Endothelial cell of umbilical vein (primary cell): ENCODE measurements at regions of chr10 and their contacts with region 1.

Region 1: DNA sequence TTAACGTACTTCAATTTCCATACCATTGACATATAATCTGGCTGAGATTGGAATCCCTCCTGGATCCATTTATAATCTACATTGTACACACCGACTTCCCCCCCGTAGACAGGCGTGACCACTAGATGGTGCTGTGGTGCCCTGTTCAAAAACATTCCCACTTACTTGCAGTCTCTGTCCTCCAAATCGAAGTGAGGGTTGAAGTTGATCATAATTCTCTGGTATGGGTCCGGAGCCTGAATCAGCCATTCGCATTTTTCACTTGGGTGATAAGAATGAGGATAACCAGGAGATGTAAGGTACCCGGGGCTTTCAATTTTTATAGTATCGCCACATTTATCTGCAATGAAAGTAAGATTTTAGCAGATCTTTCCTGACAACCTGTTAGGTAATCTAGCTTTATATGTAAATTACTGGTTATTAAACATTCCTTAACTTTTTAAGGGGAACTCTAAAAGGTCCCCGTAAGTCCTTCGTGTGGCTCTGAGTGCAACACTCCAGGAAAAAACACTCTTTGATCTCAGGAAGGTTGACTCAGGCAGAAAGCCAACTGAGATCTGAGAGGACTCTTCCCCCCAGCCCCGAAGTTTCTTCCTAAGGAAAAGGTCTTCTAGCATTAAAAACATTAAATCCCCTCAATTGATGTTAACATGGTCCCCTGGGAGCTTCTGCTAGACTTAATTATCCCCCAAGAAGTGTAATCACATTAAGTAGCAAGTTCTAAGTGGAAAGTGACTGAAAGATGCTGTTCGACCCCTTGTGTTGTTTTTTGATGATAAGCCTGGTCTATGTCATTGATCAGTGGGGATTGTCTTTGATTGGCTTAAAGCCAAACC is 3.7 kb downstream of the NRP1 start:
- DNase-seq: peak; percentile 92
- H3K4me3 ChIP-seq: peak overlapping the region; percentile 90 to 100 (median 97)
- H3K27ac ChIP-seq: peak overlapping the region; percentile 84
- H3K4me1 ChIP-seq: peaks cover 45% of the 10 kb centered on the region
- H3K27me3 ChIP-seq: no peaks in the 10 kb centered on the region
- CTCF ChIP-seq: peak; percentile 69 to 88
- POLR2A ChIP-seq: no peak

Region 2: GRCh38 chr10:33115738-33116719 is 214.7 kb before region 1 on chr10:
- CTCF ChIA-PET with region 1: interaction called, 6 read pairs
- POLR2A ChIA-PET with region 1: no interaction called
- dilution Hi-C with region 1: no loop called
- intact Hi-C with region 1: loop called (anchors 5 kb)
- DNase-seq: peak; percentile 81
- H3K4me3 ChIP-seq: no peak overlapping the region
- H3K27ac ChIP-seq: no peak overlapping the region
- H3K4me1 ChIP-seq: peaks cover 3% of the 10 kb centered on the region
- H3K27me3 ChIP-seq: no peaks in the 10 kb centered on the region
- CTCF ChIP-seq: peak; percentile 75 to 77
- POLR2A ChIP-seq: no peak

Region 3: GRCh38 chr10:33661580-33662336 is 331.0 kb after region 1 on chr10:
- CTCF ChIA-PET with region 1: interaction called, 4 read pairs
- POLR2A ChIA-PET with region 1: no interaction called
- dilution Hi-C with region 1: no loop called
- intact Hi-C with region 1: loop called (anchors 10 kb)
- DNase-seq: peak; percentile 54
- H3K4me3 ChIP-seq: no peak overlapping the region
- H3K27ac ChIP-seq: no peak overlapping the region
- H3K4me1 ChIP-seq: peaks cover 14% of the 10 kb centered on the region
- H3K27me3 ChIP-seq: no peaks in the 10 kb centered on the region
- CTCF ChIP-seq: no peak
- POLR2A ChIP-seq: no peak

Region 4: DNA sequence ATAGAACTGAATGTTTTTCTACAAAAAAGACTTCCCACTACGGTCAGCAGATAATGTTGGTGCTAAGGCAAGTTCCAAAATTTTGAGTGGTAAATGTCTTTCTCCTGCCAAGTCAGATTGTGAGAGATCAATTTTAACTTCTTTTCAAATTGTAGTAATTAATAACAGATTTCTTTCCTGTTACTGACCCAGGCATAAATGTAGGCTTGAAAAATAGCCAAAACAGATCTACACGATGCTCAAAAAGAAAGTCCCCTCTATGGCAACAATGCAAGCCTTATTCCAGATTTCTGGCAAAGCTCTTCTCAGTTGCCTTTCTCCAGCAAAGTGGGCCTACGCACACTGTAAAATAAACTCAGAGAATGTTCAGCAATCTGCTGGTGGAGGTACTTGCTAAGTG is 644.7 kb after region 1 on chr10:
- CTCF ChIA-PET with region 1: no interaction called
- POLR2A ChIA-PET with region 1: no interaction called
- dilution Hi-C with region 1: no loop called
- intact Hi-C with region 1: loop called (anchors 10 kb)
- DNase-seq: no peak
- H3K4me3 ChIP-seq: no peak overlapping the region
- H3K27ac ChIP-seq: no peak overlapping the region
- H3K4me1 ChIP-seq: no peaks in the 10 kb centered on the region
- H3K27me3 ChIP-seq: peaks cover 10 to 12% of the 10 kb centered on the region in 2 experiments
- CTCF ChIP-seq: no peak
- POLR2A ChIP-seq: no peak

Region 5: GRCh38 chr10:34254596-34254995 is 923.8 kb after region 1 on chr10:
- CTCF ChIA-PET with region 1: no interaction called
- POLR2A ChIA-PET with region 1: no interaction called
- dilution Hi-C with region 1: no loop called
- intact Hi-C with region 1: loop called (anchors 10 kb)
- DNase-seq: peak; percentile 88
- H3K4me3 ChIP-seq: no peak overlapping the region
- H3K27ac ChIP-seq: no peak overlapping the region
- H3K4me1 ChIP-seq: peaks cover 12% of the 10 kb centered on the region
- H3K27me3 ChIP-seq: no peaks in the 10 kb centered on the region
- CTCF ChIP-seq: no peak
- POLR2A ChIP-seq: no peak

Region 6: GRCh38 chr10:34434119-34434594 is 1103.4 kb after region 1 on chr10:
- CTCF ChIA-PET with region 1: interaction called, 3 read pairs
- POLR2A ChIA-PET with region 1: interaction called, 10 read pairs
- dilution Hi-C with region 1: no loop called
- intact Hi-C with region 1: no loop called
- DNase-seq: peak; percentile 33
- H3K4me3 ChIP-seq: no peak overlapping the region
- H3K27ac ChIP-seq: no peak overlapping the region
- H3K4me1 ChIP-seq: peaks cover 34% of the 10 kb centered on the region
- H3K27me3 ChIP-seq: no peaks in the 10 kb centered on the region
- CTCF ChIP-seq: no peak
- POLR2A ChIP-seq: no peak

Region 7: GRCh38 chr10:34637418-34637911 is 1306.7 kb after region 1 on chr10:
- CTCF ChIA-PET with region 1: interaction called, 61 read pairs
- POLR2A ChIA-PET with region 1: no interaction called
- dilution Hi-C with region 1: no loop called
- intact Hi-C with region 1: loop called (anchors 1 kb)
- DNase-seq: peak; percentile 57
- H3K4me3 ChIP-seq: no peak overlapping the region
- H3K27ac ChIP-seq: no peak overlapping the region
- H3K4me1 ChIP-seq: peaks cover 4% of the 10 kb centered on the region
- H3K27me3 ChIP-seq: no peaks in the 10 kb centered on the region
- CTCF ChIP-seq: peak; percentile 91 to 95
- POLR2A ChIP-seq: no peak